ENCODE measurements at regions of chr17 and their contacts with region 1.

Region 1: GRCh38 chr17:48047741-48048383 is at the start of gene NFE2L1:
- DNase-seq: peak; percentile 100
- H3K4me3 Mint-ChIP-seq: peak within 1 kb of the TSS; percentile 99
- H3K27ac Mint-ChIP-seq: peak within 1 kb of the TSS; percentile 98
- H3K4me1 Mint-ChIP-seq: peaks cover 51% of the 10 kb centered on the region
- H3K27me3 Mint-ChIP-seq: no peaks in the 10 kb centered on the region
- total RNA-seq, gene NFE2L1: 95.2 to 102 TPM

Region 2: DNA sequence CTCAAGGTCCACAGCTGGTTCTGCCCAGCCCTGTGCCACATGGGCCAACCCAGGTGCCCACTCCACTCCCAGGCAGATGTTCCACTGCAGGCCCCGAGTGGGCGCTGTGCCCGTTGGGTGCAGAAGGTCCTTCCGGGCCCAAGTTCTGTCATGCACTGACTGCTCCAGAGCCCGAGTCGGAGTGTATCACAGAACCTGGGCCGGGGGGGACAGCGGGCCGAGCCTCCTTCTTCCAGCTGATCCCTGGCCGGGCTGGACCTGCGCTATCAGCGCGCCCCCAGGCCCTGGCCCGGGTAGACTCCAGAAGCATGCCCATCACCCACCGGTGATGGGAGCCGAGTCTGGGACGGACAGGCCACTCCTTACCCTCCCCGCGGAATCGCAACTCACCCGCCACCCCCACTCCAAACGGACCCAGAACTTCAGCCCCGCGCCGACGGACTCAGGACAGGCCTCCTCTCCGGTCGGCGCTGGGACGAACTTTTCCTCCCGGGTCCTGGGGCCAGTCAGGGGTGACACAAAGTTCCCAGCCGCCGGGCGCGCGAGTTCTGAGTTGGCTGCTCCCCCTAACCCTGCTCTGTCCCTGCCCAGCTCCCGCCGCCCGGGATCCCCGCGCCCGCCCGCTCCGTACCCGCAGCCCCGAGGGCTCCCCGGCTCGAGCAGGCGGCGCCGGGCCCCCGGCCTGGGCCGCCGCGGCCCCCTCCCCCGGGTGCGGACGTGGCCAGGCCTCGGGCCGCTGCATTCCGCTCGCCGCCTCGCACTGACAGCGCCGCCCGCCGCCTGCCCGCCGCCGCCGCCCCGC is 10.6 kb before region 1 on chr17 and contains the start of gene COPZ2:
- CTCF ChIA-PET with region 1: interaction called, 10 read pairs
- intact Hi-C with region 1: loop called (anchors 1 kb)
- DNase-seq: peak; percentile 75
- H3K4me3 Mint-ChIP-seq: peak within 1 kb of the TSS; percentile 75
- H3K27ac Mint-ChIP-seq: no peak within 1 kb of the TSS
- H3K4me1 Mint-ChIP-seq: peaks cover 7% of the 10 kb centered on the region
- H3K27me3 Mint-ChIP-seq: peaks cover 32% of the 10 kb centered on the region
- total RNA-seq, gene COPZ2: 2.4 to 3.3 TPM

Region 3: GRCh38 chr17:48101012-48101720 is 53.3 kb after region 1 on chr17 and contains the start of gene CBX1:
- CTCF ChIA-PET with region 1: no interaction called
- intact Hi-C with region 1: loop called (anchors 1 kb)
- DNase-seq: peak; percentile 95
- H3K4me3 Mint-ChIP-seq: peak within 1 kb of the TSS; percentile 97
- H3K27ac Mint-ChIP-seq: peak within 1 kb of the TSS; percentile 81
- H3K4me1 Mint-ChIP-seq: peaks cover 34% of the 10 kb centered on the region
- H3K27me3 Mint-ChIP-seq: no peaks in the 10 kb centered on the region
- total RNA-seq, gene CBX1: 61.6 to 63.0 TPM

Region 4: DNA sequence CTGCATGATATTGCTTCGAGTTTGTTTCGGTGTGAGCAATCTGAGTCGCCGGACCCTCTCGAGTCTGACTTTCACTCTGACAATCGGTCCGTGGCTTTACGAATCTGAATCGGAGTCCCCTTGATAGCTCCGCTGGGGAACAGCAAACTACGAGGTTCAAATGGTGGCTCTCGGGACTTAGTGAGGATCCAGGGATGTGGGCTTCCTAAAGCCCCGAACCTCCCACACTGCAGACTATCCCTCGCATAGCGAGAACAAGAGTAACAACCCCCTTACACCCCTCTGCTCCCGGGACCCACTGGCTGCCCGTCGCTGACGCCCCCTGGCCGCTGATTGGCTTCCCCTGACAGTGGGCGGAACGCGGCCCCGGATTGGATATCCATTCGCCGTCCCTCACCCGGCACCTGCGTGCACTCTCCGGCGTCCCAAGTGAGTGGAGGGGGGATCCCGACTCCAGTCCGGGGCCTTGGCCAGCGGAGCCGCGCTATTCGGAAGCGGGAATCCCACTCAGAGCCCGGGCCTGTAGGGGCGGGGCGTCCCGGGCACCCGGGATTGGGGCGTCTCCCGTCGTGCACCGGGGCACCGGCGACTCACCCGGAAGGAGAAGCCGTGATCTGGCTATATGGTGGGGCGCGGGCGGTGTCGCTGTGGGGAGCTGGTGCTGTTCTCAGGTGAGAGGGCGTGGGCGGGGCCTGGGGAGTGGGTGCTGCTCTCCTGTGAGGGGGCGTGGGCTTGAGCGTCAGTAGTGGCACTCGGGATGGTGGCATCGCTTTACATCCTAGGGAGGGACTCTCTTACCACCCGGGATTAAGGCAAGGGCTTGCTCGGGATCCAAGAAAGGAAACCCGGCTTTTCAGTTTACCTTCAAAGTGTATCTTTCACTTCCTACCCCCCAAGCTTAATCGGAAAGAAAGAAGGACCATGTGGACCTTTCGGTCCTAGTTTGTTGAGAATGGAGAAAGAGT is 59.6 kb after region 1 on chr17 and contains the start of gene SNX11:
- CTCF ChIA-PET with region 1: interaction called, 5 read pairs
- intact Hi-C with region 1: loop called (anchors 1 kb)
- DNase-seq: peak; percentile 96
- H3K4me3 Mint-ChIP-seq: peak within 1 kb of the TSS; percentile 97
- H3K27ac Mint-ChIP-seq: peak within 1 kb of the TSS; percentile 93
- H3K4me1 Mint-ChIP-seq: peaks cover 56% of the 10 kb centered on the region
- H3K27me3 Mint-ChIP-seq: no peaks in the 10 kb centered on the region
- total RNA-seq, gene SNX11: 20.2 to 23.0 TPM

Region 5: DNA sequence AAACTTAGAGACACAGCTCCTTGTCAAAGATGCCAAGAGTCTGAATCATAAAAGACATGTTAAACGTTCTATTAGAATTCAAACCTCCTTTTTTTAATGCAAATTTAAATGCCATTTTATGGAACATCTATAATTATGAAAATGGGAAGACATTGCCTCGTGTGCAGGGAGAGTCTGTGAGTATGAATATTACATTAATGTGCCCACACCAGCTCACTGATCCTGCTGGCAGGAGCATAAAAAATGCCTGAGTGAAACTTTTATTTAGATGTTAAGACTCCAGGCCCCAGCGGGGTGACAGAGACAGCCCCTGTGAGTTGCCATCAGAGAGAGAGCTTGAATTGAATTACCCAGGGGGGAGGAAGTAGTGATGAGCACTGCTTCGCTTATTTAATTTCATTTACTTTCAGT is 144.5 kb after region 1 on chr17:
- CTCF ChIA-PET with region 1: no interaction called
- intact Hi-C with region 1: no loop called
- DNase-seq: no peak
- H3K4me3 Mint-ChIP-seq: no peak overlapping the region
- H3K27ac Mint-ChIP-seq: no peak overlapping the region
- H3K4me1 Mint-ChIP-seq: peaks cover 32% of the 10 kb centered on the region
- H3K27me3 Mint-ChIP-seq: no peaks in the 10 kb centered on the region